ENCODE measurements at regions of chr19 and their contacts with region 1.

Region 1: GRCh38 chr19:3324321-3324856 is 42.0 kb upstream of the NFIC start:
- DNase-seq: peak; percentile 79 to 87 (median 82)
- ATAC-seq: peak; percentile 91
- H3K4me3 ChIP-seq: no peak overlapping the region
- H3K27ac ChIP-seq: no peak overlapping the region
- H3K4me1 ChIP-seq: peaks cover 0 to 9% of the 10 kb centered on the region in 2 experiments; a peak in 3 of 5 replicates
- H3K27me3 ChIP-seq: no peaks in the 10 kb centered on the region; a peak in 1 of 5 replicates
- CTCF ChIP-seq: peak; percentile 83 to 96 (median 85)
- EP300 ChIP-seq: no peak
- POLR2A ChIP-seq: no peak
- RAD21 ChIP-seq: peak in 1 of 2 experiments; percentile 63; a peak in 3 of 4 replicates

Region 2: GRCh38 chr19:3284759-3285646 is 39.4 kb before region 1 on chr19:
- CTCF ChIA-PET with region 1: no interaction called
- POLR2A ChIA-PET with region 1: no interaction called
- in situ Hi-C with region 1: no loop called
- intact Hi-C with region 1: no loop called
- DNase-seq: peak; percentile 89 to 99 (median 93)
- ATAC-seq: peak; percentile 94
- H3K4me3 ChIP-seq: peak overlapping the region; percentile 43
- H3K27ac ChIP-seq: peak overlapping the region; percentile 85
- H3K4me1 ChIP-seq: peaks cover 12 to 33% of the 10 kb centered on the region in 2 experiments
- H3K27me3 ChIP-seq: peaks cover 11 to 26% of the 10 kb centered on the region in 2 experiments; a peak in 3 of 5 replicates
- CTCF ChIP-seq: no peak
- EP300 ChIP-seq: no peak
- POLR2A ChIP-seq: peak; percentile 78
- RAD21 ChIP-seq: no peak

Region 3: DNA sequence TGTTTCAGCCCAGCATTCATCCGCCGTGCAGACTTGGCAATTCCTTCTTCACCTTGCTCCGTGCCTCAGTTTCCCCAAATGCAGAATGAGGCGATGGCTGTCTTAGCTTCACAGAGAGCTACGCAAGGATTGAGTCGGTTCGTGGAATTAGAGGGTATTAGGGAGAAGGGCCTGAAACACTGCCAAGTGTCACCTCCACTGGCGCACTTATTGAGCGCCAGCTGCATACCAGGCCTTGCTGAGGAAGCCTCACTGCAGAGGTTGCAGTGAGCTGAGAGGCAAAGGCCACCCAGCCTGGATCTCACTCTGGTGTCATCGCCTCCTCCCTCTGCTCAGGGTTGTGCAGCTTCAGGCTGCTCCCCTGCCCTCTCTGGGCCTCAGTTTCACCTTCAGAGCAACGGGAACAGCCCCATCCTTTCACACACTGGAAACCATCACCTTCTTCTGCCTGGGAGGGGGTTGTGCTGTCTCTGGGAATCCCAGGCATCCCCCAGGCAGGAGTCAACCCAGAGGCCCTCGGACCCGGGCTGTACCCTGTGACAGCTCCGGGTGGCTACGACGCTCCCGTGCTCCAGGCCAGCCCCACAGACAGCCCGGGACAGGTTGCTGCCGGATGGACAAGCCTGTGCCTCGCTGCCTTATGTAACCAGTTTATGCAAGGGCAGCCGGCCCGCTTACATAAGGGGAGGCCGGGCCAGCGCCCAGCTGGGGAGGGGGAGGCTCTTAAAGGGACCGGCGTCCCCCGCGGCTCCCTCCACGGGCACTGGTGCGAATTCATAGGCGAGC is 73.9 kb after region 1 on chr19:
- CTCF ChIA-PET with region 1: no interaction called
- POLR2A ChIA-PET with region 1: no interaction called
- in situ Hi-C with region 1: no loop called
- intact Hi-C with region 1: no loop called
- DNase-seq: no peak
- ATAC-seq: no peak
- H3K4me3 ChIP-seq: no peak overlapping the region
- H3K27ac ChIP-seq: no peak overlapping the region
- H3K4me1 ChIP-seq: peaks cover 3 to 41% of the 10 kb centered on the region in 2 experiments; a peak in 4 of 5 replicates
- H3K27me3 ChIP-seq: no peaks in the 10 kb centered on the region
- CTCF ChIP-seq: no peak
- EP300 ChIP-seq: no peak
- POLR2A ChIP-seq: no peak
- RAD21 ChIP-seq: no peak

Region 4: DNA sequence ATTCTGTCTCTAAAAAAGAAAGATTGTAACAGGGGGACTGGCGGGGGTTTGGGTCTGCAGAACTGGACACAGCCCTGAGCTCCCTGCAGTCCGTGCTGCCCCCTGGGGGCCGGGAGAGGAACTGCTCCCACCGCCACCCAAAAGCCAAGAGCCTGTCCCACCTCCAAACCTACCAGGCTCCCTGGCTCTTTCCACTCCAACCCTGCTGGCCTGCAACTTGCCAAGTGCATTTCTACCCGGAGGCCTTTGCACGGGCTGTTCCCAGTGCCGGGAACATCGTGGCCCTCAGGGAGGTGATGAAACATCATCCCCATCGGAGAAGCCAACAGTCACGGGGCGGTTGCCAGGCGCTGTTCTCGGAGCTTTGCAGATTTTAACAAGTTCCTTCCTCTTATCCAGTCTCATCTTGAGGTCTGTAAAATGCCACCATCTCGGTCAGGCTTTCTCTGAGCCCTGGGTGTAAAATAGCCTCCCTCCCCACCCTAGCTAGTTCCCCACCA is 105.2 kb after region 1 on chr19:
- CTCF ChIA-PET with region 1: interaction called, 34 read pairs
- POLR2A ChIA-PET with region 1: no interaction called
- in situ Hi-C with region 1: no loop called
- intact Hi-C with region 1: loop called (anchors 1 kb)
- DNase-seq: peak; percentile 83 to 84 (median 83)
- ATAC-seq: peak; percentile 86
- H3K4me3 ChIP-seq: no peak overlapping the region
- H3K27ac ChIP-seq: no peak overlapping the region
- H3K4me1 ChIP-seq: peaks cover 0 to 33% of the 10 kb centered on the region in 2 experiments
- H3K27me3 ChIP-seq: no peaks in the 10 kb centered on the region
- CTCF ChIP-seq: peak; percentile 84 to 90 (median 88)
- EP300 ChIP-seq: no peak
- POLR2A ChIP-seq: no peak
- RAD21 ChIP-seq: peak; percentile 73 to 86

Region 5: GRCh38 chr19:3440082-3440481 is 115.7 kb after region 1 on chr19:
- CTCF ChIA-PET with region 1: interaction called, 11 read pairs
- POLR2A ChIA-PET with region 1: no interaction called
- in situ Hi-C with region 1: no loop called
- intact Hi-C with region 1: no loop called
- DNase-seq: peak; percentile 62 to 73 (median 68)
- ATAC-seq: peak; percentile 77
- H3K4me3 ChIP-seq: no peak overlapping the region
- H3K27ac ChIP-seq: no peak overlapping the region
- H3K4me1 ChIP-seq: peaks cover 4 to 21% of the 10 kb centered on the region in 2 experiments; a peak in 4 of 5 replicates
- H3K27me3 ChIP-seq: no peaks in the 10 kb centered on the region
- CTCF ChIP-seq: peak; percentile 66 to 71 (median 69)
- EP300 ChIP-seq: no peak
- POLR2A ChIP-seq: no peak
- RAD21 ChIP-seq: peak; percentile 32 to 62

Region 6: DNA sequence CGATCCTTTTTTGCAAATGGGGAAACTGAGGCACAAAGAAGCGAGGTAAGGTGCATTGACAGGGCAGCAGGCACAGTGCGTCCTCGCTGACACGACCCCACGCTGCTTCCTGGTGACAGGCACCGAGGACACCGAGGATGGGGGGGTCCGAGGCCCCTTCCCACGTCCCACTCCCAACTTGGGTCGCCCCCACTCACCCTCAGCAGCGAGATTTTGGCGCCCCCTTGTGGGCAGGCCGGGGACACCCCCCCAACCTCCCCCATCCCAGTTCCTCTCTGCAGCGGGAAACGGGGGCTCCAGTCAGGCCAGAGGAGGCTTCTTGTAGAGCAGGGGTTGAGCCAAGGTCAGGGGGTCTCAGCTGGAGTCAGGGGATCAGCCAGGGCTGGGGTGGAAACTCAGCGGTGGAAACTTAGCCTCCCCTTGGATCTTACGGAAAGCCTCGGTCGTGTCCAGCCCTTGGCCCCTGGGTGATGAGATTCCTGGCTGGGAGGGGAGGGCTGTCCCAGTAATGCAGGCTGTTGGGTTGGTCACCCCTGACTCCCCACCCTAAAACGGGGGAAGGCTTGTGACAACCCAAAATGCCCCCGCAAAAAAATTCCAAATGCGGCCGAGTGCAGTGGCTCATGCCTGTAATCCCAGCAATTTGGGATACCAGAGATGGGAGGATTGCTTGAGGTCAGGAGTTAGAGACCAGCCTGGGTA is 147.7 kb after region 1 on chr19:
- CTCF ChIA-PET with region 1: interaction called, 37 read pairs
- POLR2A ChIA-PET with region 1: no interaction called
- in situ Hi-C with region 1: loop called (anchors 5 kb)
- intact Hi-C with region 1: loop called (anchors 1 kb)
- DNase-seq: peak; percentile 58 to 81 (median 78)
- ATAC-seq: peak; percentile 84
- H3K4me3 ChIP-seq: no peak overlapping the region
- H3K27ac ChIP-seq: no peak overlapping the region
- H3K4me1 ChIP-seq: peaks cover 0 to 10% of the 10 kb centered on the region in 2 experiments; a peak in 2 of 5 replicates
- H3K27me3 ChIP-seq: no peaks in the 10 kb centered on the region
- CTCF ChIP-seq: peak; percentile 73 to 89 (median 88)
- EP300 ChIP-seq: no peak
- POLR2A ChIP-seq: no peak
- RAD21 ChIP-seq: peak; percentile 59 to 90

Region 7: GRCh38 chr19:3479177-3479833 is 154.9 kb after region 1 on chr19:
- CTCF ChIA-PET with region 1: interaction called, 33 read pairs
- POLR2A ChIA-PET with region 1: no interaction called
- in situ Hi-C with region 1: loop called (anchors 5 kb)
- intact Hi-C with region 1: no loop called
- DNase-seq: peak; percentile 85 to 96 (median 92)
- ATAC-seq: peak; percentile 89
- H3K4me3 ChIP-seq: peak overlapping the region; percentile 43
- H3K27ac ChIP-seq: no peak overlapping the region
- H3K4me1 ChIP-seq: peaks cover 11 to 45% of the 10 kb centered on the region in 2 experiments
- H3K27me3 ChIP-seq: peaks cover 21 to 27% of the 10 kb centered on the region in 2 experiments; a peak in 3 of 5 replicates
- CTCF ChIP-seq: no peak
- EP300 ChIP-seq: no peak
- POLR2A ChIP-seq: no peak
- RAD21 ChIP-seq: no peak

Region 8: DNA sequence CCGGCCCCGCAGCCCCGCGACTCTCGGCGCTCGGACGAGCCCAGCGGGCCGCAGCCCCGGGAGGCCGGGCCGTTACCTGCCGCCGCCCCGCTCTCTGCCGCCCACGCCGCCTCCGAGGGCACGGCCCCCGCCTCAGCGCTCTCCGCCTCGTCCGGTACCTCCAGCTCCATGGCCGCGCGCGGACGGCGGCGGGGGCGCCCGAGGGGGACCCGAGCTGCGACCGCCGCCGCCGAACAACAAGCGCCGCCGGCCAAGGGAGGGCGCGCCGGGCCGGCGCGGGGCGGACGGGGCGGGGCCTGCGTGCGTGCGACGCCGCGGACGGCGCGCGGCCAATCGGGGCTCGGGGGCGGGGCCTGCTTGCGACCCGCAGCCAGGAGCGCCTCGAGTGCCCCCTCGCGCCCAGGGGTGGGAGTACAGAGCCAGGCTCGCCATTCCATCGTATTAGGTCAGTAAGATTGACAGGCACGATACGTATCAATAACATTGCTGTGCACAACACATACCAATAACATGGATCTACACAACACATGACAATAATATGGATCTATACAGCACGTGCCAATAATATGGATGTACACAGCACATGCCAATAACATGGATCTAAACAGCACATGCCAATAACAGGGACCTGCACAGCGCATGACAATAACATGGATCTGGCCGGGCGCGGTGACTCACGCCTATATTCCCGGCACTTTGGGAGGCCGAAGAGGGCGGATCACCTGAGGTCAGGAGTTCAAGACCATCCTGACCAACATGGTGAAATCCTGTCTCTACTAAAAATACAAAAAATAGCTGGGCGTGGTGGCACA is 376.0 kb after region 1 on chr19 and contains the start of gene PIP5K1C:
- CTCF ChIA-PET with region 1: no interaction called
- POLR2A ChIA-PET with region 1: no interaction called
- in situ Hi-C with region 1: loop called (anchors 10 kb)
- intact Hi-C with region 1: loop called (anchors 10 kb)
- DNase-seq: peak; percentile 93 to 97 (median 96)
- ATAC-seq: peak; percentile 93
- H3K4me3 ChIP-seq: peak within 1 kb of the TSS; percentile 85
- H3K27ac ChIP-seq: peak within 1 kb of the TSS; percentile 81
- H3K4me1 ChIP-seq: peaks cover 15 to 48% of the 10 kb centered on the region in 2 experiments
- H3K27me3 ChIP-seq: no peaks in the 10 kb centered on the region
- CTCF ChIP-seq: peak; percentile 84 to 90 (median 89)
- EP300 ChIP-seq: no peak
- POLR2A ChIP-seq: no peak
- RAD21 ChIP-seq: peak; percentile 80 to 92
- polyA plus RNA-seq, gene PIP5K1C: 0.38 to 0.61 TPM